GM23248 (cell line): ENCODE measurements at regions of chr9 and their contacts with region 1.

Region 1: GRCh38 chr9:133478851-133479711 is at the start of gene SLC2A6:
- DNase-seq: peak; percentile 93
- H3K4me3 ChIP-seq: peak within 1 kb of the TSS; percentile 75
- H3K27ac ChIP-seq: no peak within 1 kb of the TSS
- H3K4me1 ChIP-seq: no peaks in the 10 kb centered on the region
- H3K27me3 ChIP-seq: no peaks in the 10 kb centered on the region
- total RNA-seq, gene SLC2A6: 10.1 and 12.0 TPM in 2 replicates

Region 2: GRCh38 chr9:133030317-133031129 is 448.6 kb before region 1 on chr9 and contains the start of gene GTF3C5:
- in situ Hi-C with region 1: loop called (anchors 25 kb)
- DNase-seq: peak; percentile 100
- H3K4me3 ChIP-seq: peak within 1 kb of the TSS; percentile 92
- H3K27ac ChIP-seq: peak within 1 kb of the TSS; percentile 79
- H3K4me1 ChIP-seq: peaks cover 7% of the 10 kb centered on the region; the same call in 1 of the 2 replicates
- H3K27me3 ChIP-seq: no peaks in the 10 kb centered on the region
- total RNA-seq, gene GTF3C5: 33.6 and 40.1 TPM in 2 replicates